ENCODE measurements at regions of chr1 and their contacts with region 1.

Region 1: DNA sequence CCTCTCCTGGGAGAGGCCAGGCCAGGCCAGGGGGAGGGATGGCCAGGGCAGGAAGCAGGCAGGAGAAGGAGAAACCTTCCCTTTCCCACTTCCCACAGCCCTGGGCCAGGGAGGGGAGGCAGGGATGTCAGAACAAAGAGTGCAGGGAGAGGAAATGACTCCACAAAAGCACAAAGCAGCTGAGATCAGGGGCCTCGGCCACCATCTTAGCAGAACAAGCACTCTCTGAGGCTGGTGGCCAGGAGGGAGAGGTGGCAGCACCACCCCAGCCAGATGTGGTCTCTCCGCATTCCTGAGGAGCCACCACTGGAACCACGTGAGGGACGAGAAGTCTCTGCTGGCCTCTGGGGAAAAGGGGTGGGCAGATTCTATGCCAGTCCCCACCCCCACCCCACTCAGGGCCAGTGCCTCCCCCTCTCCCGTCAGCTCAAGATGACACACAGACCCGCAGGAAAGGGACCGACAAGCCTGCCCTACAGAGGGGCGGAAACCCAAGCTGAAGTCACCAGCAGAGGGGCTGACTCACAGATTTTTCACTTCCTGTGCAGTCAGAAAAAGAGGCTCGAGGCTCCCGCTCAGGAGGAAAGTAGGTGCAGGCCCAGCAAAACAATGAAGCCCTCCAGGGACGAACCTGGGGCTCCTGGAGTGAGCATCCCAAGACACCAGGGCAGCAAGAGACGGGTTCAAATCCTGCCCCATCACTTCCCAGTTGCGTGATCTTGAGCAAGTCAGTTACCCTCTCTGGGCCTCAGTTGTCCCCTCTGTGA is 24.1 kb upstream of the ALDH4A1 start:
- DNase-seq: peak; percentile 91
- H3K4me3 Mint-ChIP-seq: peak overlapping the region; percentile 76
- H3K27ac Mint-ChIP-seq: peak overlapping the region; percentile 99
- H3K4me1 Mint-ChIP-seq: peaks cover 70% of the 10 kb centered on the region
- H3K27me3 Mint-ChIP-seq: no peaks in the 10 kb centered on the region

Region 2: DNA sequence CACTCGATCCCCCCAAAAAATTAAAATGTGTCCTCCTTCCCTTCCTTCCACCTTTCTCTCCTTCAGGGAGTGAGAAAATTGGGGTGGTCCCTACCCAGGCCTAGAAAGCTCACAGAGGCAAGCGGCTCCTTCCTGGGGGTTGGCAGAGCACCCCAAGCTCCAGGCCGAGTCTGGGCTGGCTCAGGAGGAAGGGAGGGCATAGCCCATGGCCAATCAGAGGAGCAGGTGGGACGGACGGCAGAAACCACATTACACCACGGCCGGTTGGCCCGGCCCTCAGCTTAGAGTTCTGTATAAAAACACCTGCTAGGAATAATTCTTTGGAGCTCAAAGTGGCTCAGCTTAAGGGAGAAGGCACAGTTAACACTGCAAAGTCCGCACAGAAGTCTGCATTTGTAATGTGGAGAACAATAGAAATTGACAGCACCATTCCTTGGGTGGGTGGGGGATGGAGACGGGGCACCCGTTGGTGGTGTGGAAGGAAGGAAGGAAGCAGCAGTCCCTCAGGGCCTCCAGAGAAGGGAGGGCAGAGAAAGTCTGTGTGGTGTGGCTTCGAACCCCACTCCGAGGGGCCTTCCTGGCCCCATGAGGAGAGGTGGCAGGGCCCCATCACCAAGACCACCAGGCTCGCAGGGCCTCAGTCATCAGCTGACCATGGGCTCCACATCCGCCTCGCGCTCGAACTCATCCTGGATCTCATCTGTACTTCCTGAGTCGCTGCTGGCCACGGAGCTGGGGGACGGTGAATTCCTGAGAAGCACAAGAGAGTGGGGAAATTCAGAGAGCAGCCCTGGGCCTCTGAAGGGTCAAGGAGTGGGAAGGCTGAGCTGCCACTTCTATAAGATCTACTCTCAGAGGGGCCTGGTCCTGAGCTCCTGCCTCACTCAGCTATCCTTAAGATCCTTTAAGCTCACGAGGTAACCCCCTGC is 18.3 kb before region 1 on chr1:
- CTCF ChIA-PET with region 1: interaction called, 89 read pairs
- POLR2A ChIA-PET with region 1: interaction called, 26 read pairs
- DNase-seq: no peak
- H3K4me3 Mint-ChIP-seq: no peak overlapping the region
- H3K27ac Mint-ChIP-seq: no peak overlapping the region
- H3K4me1 Mint-ChIP-seq: peaks cover 14% of the 10 kb centered on the region
- H3K27me3 Mint-ChIP-seq: no peaks in the 10 kb centered on the region

Region 3: DNA sequence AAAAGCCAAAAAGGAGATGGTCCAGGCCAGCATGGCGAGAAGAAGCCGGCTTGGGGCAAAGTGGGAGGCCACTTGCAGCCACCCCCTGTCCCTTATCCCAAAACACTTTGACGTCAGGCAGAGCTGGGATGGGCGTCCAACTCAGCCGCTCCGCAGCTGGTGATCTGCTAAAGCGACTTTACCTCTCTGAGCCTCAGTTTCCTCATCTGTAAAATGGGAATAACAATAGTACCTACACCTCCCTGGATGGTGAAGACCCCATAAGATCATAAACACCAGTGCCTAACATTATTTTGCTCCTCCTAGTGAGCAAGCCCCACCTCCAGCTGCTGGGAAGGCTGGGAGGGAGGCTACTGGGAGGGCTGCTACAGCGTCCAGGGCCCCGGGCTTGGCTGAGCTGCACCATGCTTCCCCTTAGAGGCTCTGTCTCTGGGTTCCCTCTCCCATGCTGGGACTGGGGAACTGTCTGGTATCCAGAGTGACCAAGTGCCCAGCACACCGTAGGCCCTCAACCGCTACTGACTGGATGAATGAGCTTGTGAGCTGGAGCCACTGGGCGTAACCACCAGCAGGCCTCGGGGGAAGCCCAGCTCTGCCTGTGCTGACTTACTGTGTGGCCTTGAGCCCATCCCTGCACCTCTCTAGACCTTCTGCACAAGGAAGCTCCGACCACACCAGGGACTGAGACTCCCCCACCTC is 11.7 kb after region 1 on chr1:
- CTCF ChIA-PET with region 1: no interaction called
- POLR2A ChIA-PET with region 1: interaction called, 23 read pairs
- DNase-seq: no peak
- H3K4me3 Mint-ChIP-seq: no peak overlapping the region
- H3K27ac Mint-ChIP-seq: no peak overlapping the region
- H3K4me1 Mint-ChIP-seq: peaks cover 8% of the 10 kb centered on the region
- H3K27me3 Mint-ChIP-seq: no peaks in the 10 kb centered on the region

Region 4: DNA sequence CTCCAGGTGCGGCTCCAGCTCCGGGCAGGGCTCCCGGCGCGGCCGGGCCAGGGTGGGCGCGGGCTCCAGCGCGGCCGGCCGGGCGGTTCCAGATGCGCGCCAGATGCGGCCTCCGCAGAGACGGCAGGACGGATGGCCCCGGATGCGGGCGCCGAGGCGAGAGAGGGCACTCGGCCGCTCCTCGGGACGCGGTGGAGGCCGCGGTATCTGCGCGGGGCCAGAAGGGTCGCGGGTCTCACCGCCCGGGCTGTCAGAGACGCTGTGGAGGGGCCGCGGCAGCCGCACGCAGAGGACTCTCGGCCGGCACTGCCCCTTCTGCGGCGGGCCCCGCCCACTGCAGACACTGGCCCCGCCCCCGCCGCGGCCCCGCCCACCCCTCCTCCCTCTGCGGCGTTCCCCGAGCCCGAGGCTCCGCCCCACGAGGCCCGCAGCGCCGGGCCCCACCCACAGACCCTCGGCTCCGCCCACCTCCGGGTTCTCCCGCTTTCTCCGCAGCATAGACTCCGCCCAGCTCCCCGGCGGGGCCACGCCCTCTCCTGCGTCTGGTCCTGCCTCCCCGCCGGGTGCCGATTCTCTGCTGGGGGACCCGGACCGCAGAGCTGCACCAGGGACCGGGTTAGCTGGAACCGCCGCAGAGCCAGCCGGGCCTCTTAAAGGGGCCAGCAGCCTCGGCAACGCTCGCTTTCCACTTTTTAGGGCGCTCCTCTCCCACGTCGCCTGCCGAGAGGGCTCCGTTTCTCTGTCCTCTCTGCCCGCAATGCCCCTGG is 30.1 kb after region 1 on chr1 and contains the start of gene IFFO2:
- CTCF ChIA-PET with region 1: interaction called, 38 read pairs
- POLR2A ChIA-PET with region 1: interaction called, 414 read pairs
- DNase-seq: peak; percentile 97
- H3K4me3 Mint-ChIP-seq: peak within 1 kb of the TSS; percentile 83
- H3K27ac Mint-ChIP-seq: peak within 1 kb of the TSS; percentile 23
- H3K4me1 Mint-ChIP-seq: peaks cover 57% of the 10 kb centered on the region
- H3K27me3 Mint-ChIP-seq: peaks cover 24% of the 10 kb centered on the region
- total RNA-seq, gene IFFO2: 19.9 to 22.7 TPM

Region 5: GRCh38 chr1:18978706-18979105 is 52.2 kb after region 1 on chr1:
- CTCF ChIA-PET with region 1: no interaction called
- POLR2A ChIA-PET with region 1: no interaction called
- DNase-seq: no peak
- H3K4me3 Mint-ChIP-seq: no peak overlapping the region
- H3K27ac Mint-ChIP-seq: no peak overlapping the region
- H3K4me1 Mint-ChIP-seq: no peaks in the 10 kb centered on the region
- H3K27me3 Mint-ChIP-seq: peaks cover 43% of the 10 kb centered on the region

Region 6: DNA sequence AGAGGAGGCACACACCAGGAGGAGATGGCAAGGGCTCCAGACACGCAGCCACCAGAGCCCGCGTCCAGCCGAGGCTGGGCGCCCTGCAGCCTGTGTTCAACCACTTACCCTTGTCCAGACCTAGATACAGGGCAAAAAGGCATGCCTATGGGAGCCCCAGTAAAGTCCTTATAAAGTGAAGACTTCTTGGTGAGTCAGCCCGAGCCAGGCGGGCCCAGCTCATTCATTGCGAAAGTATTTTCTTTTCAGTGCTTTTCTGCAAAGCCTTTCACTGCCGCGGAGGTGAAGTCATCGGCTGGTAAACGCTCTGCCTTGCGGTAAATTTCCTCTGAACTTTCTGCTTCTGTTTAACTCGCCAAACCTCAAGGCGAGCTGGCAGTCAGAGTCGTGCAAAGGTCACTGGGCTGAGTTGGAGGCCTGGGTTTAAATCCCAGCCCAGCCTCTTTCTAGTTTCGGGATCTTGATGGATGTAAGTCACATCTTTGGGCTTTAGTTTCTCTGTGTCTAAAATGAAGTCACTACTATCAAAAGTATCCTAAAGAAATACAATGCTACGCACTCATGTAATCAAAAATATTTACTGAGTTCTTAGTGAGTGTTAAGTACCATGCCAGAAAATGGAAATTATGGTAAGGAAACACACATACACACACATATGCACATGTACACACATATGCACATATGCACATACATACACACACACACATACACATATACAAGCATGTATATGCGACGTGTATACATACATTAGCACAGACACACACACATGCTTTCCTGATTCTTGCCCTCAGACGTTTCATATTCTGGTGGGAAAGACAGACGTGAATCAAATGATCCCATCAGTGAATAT is 84.7 kb after region 1 on chr1:
- CTCF ChIA-PET with region 1: no interaction called
- POLR2A ChIA-PET with region 1: interaction called, 12 read pairs
- DNase-seq: peak; percentile 85
- H3K4me3 Mint-ChIP-seq: no peak overlapping the region
- H3K27ac Mint-ChIP-seq: peak overlapping the region; percentile 1
- H3K4me1 Mint-ChIP-seq: peaks cover 28% of the 10 kb centered on the region
- H3K27me3 Mint-ChIP-seq: peaks cover 13% of the 10 kb centered on the region